H1 (cell line): ENCODE measurements at regions of chrX and their contacts with region 1.

Region 1: DNA sequence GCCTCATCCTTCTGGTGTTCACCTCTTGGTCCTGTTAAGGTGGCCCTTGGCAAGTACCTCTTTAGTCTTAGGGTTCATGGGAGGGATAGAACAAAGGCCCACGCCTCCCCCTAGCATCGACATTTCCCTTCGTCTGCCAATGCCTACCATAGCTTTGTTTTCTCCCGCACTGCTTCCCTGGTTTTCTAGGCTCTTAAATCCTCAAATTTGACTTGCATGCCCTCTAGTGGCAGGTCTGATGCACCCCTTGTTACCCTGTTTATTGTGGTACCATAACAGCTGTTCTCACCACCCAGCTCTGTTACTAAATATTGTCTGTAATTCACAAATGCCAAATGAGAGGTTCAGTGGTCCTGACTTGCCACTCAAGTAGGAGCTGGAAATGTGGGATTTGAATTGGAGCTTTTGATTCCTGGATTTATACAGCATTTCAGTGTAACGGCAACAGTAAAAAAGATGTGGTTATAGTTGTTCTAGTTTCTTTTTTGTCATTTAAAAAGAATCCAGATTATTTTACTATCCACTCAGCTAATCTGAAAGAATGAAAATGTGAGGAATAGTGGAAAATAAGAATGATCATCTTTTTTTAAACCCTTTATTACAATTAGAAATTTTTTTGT is 100.1 kb downstream of the REPS2 start:
- DNase-seq: peak; percentile 19 to 53
- H3K4me3 ChIP-seq: no peak overlapping the region
- H3K27ac ChIP-seq: no peak overlapping the region
- H3K4me1 ChIP-seq: no peaks in the 10 kb centered on the region
- H3K27me3 ChIP-seq: no peaks in the 10 kb centered on the region
- CTCF ChIP-seq: peak in 2 of 3 experiments; percentile 77; a peak in 3 of 4 replicates
- EP300 ChIP-seq: no peak
- POLR2A ChIP-seq: no peak
- RAD21 ChIP-seq: peak; percentile 83 to 85

Region 2: GRCh38 chrX:16882702-16883486 is 163.7 kb before region 1 on chrX:
- CTCF ChIA-PET with region 1: interaction called, 78 read pairs
- POLR2A ChIA-PET with region 1: interaction called, 4 read pairs
- DNase-seq: peak in 1 of 2 experiments; percentile 66
- H3K4me3 ChIP-seq: peak overlapping the region; percentile 32 to 75 (median 43); a peak in 7 of 8 replicates
- H3K27ac ChIP-seq: no peak overlapping the region
- H3K4me1 ChIP-seq: no peaks in the 10 kb centered on the region
- H3K27me3 ChIP-seq: no peaks in the 10 kb centered on the region
- CTCF ChIP-seq: peak; percentile 31 to 62 (median 54)
- EP300 ChIP-seq: no peak
- POLR2A ChIP-seq: no peak; a peak in 1 of 3 replicates
- RAD21 ChIP-seq: peak; percentile 57 to 67

Region 3: GRCh38 chrX:16993791-16994318 is 52.7 kb before region 1 on chrX:
- CTCF ChIA-PET with region 1: interaction called, 11 read pairs
- POLR2A ChIA-PET with region 1: no interaction called
- DNase-seq: no peak
- H3K4me3 ChIP-seq: no peak overlapping the region
- H3K27ac ChIP-seq: no peak overlapping the region
- H3K4me1 ChIP-seq: no peaks in the 10 kb centered on the region
- H3K27me3 ChIP-seq: no peaks in the 10 kb centered on the region
- CTCF ChIP-seq: peak in 2 of 3 experiments; percentile 29 to 59; a peak in 2 of 4 replicates
- EP300 ChIP-seq: no peak
- POLR2A ChIP-seq: no peak
- RAD21 ChIP-seq: no peak; a peak in 1 of 4 replicates

Region 4: GRCh38 chrX:17007206-17007683 is 39.3 kb before region 1 on chrX:
- CTCF ChIA-PET with region 1: interaction called, 13 read pairs
- POLR2A ChIA-PET with region 1: no interaction called
- DNase-seq: no peak
- H3K4me3 ChIP-seq: no peak overlapping the region
- H3K27ac ChIP-seq: no peak overlapping the region
- H3K4me1 ChIP-seq: no peaks in the 10 kb centered on the region
- H3K27me3 ChIP-seq: no peaks in the 10 kb centered on the region
- CTCF ChIP-seq: peak; percentile 24 to 45 (median 35); a peak in 3 of 4 replicates
- EP300 ChIP-seq: no peak
- POLR2A ChIP-seq: no peak
- RAD21 ChIP-seq: peak; percentile 18 to 36; a peak in 3 of 4 replicates

Region 5: GRCh38 chrX:17082831-17083230 is 36.2 kb after region 1 on chrX:
- CTCF ChIA-PET with region 1: interaction called, 21 read pairs
- POLR2A ChIA-PET with region 1: no interaction called
- DNase-seq: no peak
- H3K4me3 ChIP-seq: no peak overlapping the region
- H3K27ac ChIP-seq: no peak overlapping the region
- H3K4me1 ChIP-seq: no peaks in the 10 kb centered on the region
- H3K27me3 ChIP-seq: no peaks in the 10 kb centered on the region
- CTCF ChIP-seq: peak in 2 of 3 experiments; percentile 7 to 16; a peak in 2 of 4 replicates
- EP300 ChIP-seq: no peak
- POLR2A ChIP-seq: no peak
- RAD21 ChIP-seq: peak; percentile 48 to 52

Region 6: GRCh38 chrX:17120816-17121215 is 74.2 kb after region 1 on chrX:
- CTCF ChIA-PET with region 1: no interaction called
- POLR2A ChIA-PET with region 1: no interaction called
- DNase-seq: no peak
- H3K4me3 ChIP-seq: no peak overlapping the region
- H3K27ac ChIP-seq: no peak overlapping the region
- H3K4me1 ChIP-seq: no peaks in the 10 kb centered on the region
- H3K27me3 ChIP-seq: no peaks in the 10 kb centered on the region
- CTCF ChIP-seq: no peak
- EP300 ChIP-seq: no peak
- POLR2A ChIP-seq: no peak
- RAD21 ChIP-seq: no peak

Region 7: GRCh38 chrX:17278961-17279360 is 232.4 kb after region 1 on chrX:
- CTCF ChIA-PET with region 1: no interaction called
- POLR2A ChIA-PET with region 1: no interaction called
- DNase-seq: no peak
- H3K4me3 ChIP-seq: no peak overlapping the region
- H3K27ac ChIP-seq: no peak overlapping the region
- H3K4me1 ChIP-seq: no peaks in the 10 kb centered on the region
- H3K27me3 ChIP-seq: no peaks in the 10 kb centered on the region
- CTCF ChIP-seq: no peak
- EP300 ChIP-seq: no peak
- POLR2A ChIP-seq: no peak
- RAD21 ChIP-seq: no peak